PC-9 (cell line): ENCODE measurements at regions of chr13 and their contacts with region 1.

Region 1: DNA sequence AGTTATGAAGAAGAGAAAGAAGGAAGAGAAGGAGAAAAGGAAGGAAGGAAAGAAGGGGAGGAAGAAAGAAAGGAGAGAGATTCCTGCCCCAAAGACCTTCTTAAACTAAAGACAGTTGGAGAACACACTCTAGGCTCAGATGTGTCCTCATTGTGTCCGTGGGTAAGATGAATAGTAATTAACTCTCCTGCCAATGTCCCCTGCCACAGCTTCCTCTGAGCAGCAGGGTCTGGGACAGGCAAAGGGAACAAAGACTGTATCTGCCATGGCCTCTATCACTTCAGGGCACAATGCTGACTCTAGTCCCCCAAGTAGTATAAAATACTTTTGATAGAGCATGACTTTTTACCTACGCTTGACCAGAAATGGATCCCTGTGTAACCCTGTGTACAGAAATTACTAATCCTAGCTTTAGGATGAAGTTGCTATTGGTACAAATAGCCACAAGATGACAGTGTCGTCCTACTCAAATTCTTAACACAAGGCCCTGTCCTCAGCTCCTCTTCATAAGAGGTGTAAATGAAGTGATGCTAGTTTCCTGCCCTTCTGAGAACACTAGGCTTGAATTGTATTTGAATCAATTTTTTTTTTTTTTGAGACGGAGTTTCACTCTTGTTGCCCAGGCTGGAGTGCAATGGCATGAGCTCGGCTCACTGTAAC is 186.2 kb upstream of the GPR12 start:
- DNase-seq: peak in 1 of 2 experiments; percentile 57
- H3K4me3 ChIP-seq: no peak overlapping the region
- H3K27ac ChIP-seq: no peak overlapping the region
- H3K4me1 ChIP-seq: 0 out of 2 replicates have a peak, but pooled peaks cover 6% of the 10 kb centered on the region
- H3K27me3 ChIP-seq: 0 out of 2 replicates have a peak, but pooled peaks cover under 1% of the 10 kb centered on the region
- CTCF ChIP-seq: peak; percentile 86

Region 2: DNA sequence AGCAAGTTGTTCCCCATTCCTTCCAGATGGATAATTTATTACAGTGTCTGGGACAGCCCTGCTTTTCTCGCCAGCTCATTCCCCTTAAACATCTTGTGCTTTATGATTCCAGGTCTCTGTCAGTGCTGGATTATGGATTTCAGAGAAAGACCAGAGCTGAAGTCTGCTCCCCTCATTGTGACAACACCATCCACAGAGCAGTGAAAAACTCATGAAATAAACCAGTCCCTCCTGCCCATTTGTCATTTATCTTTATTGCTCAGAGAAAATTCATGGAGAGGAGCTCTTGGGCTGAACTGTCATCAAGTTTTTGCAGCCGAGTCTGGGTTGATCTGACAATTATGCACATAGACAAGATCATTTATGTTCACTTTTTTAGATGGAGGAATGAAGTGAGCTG is 93.5 kb before region 1 on chr13:
- CTCF ChIA-PET with region 1: no interaction called
- POLR2A ChIA-PET with region 1: no interaction called
- intact Hi-C with region 1: no loop called
- DNase-seq: no peak
- H3K4me3 ChIP-seq: no peak overlapping the region
- H3K27ac ChIP-seq: no peak overlapping the region
- H3K4me1 ChIP-seq: no peaks in the 10 kb centered on the region
- H3K27me3 ChIP-seq: peaks cover 77% of the 10 kb centered on the region
- CTCF ChIP-seq: no peak

Region 3: DNA sequence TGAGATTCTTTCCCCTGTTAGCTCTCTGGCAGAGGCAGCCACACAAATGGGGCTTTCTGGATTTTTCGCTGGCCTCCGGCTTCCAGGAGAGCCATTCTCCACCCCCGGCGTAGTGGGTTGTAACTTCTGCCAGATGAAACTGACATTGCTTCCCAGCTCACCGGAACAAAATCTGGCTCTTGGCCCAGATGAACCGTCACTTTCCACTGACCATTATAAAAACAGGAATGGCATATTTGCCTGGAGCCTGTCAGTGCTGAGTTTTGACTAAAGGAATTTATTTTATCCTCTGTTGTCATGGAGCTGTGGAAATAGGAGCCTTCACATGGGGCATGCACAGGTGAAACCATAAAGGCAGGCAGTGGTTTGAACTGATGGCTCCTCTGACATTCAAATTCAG is 65.6 kb before region 1 on chr13:
- CTCF ChIA-PET with region 1: no interaction called
- POLR2A ChIA-PET with region 1: no interaction called
- intact Hi-C with region 1: no loop called
- DNase-seq: no peak
- H3K4me3 ChIP-seq: no peak overlapping the region
- H3K27ac ChIP-seq: no peak overlapping the region
- H3K4me1 ChIP-seq: no peaks in the 10 kb centered on the region
- H3K27me3 ChIP-seq: peaks cover 80% of the 10 kb centered on the region
- CTCF ChIP-seq: no peak

Region 4: DNA sequence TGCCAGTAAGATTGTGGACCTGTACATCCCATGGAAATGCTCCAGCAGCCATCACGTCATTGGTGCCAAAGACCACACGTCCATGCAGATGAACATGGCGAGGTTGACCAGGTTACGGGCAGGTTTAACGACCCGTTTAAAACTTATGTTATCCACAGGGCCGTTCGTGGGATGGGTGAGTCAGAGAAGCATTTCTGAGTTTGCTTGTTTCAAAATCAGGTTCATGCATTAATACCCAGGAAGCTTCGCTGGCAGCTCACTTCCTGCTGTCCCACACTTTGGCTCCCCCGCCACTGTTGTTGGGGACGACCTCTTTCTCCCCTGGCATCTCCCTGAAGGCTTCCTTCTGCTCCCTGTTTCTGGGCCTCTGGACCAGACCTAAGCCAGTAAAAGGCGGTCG is 30.7 kb after region 1 on chr13:
- CTCF ChIA-PET with region 1: interaction called, 8 read pairs
- POLR2A ChIA-PET with region 1: interaction called, 19 read pairs
- intact Hi-C with region 1: no loop called
- DNase-seq: no peak
- H3K4me3 ChIP-seq: no peak overlapping the region
- H3K27ac ChIP-seq: no peak overlapping the region
- H3K4me1 ChIP-seq: peaks cover 2% of the 10 kb centered on the region
- H3K27me3 ChIP-seq: 0 out of 2 replicates have a peak, but pooled peaks cover 21% of the 10 kb centered on the region
- CTCF ChIP-seq: no peak

Region 5: GRCh38 chr13:27283906-27284493 is 337.2 kb after region 1 on chr13:
- CTCF ChIA-PET with region 1: interaction called, 4 read pairs
- POLR2A ChIA-PET with region 1: no interaction called
- intact Hi-C with region 1: loop called (anchors 5 kb)
- DNase-seq: peak; percentile 46 to 49
- H3K4me3 ChIP-seq: no peak overlapping the region
- H3K27ac ChIP-seq: no peak overlapping the region
- H3K4me1 ChIP-seq: peaks cover 20% of the 10 kb centered on the region
- H3K27me3 ChIP-seq: no peaks in the 10 kb centered on the region
- CTCF ChIP-seq: peak; percentile 65

Region 6: DNA sequence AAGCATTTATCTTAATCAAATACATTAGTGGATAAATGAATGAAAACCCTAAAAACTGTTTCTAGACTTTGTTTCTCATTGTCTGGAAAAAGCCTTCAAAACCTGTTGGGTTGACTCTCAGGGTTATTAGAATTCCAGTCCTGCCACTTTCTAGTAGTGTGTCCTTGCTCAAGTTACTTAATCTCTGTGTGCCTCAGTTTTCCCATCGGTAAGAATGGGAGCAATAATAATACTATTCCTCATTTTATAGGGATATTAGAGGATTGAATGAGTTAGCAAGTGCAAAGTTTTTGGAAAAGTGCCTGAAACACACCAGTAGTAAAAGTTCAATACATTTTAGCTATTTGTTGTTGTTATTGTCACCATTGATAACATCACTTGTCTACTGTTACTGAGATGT is 1038.8 kb after region 1 on chr13:
- CTCF ChIA-PET with region 1: interaction called, 5 read pairs
- POLR2A ChIA-PET with region 1: no interaction called
- intact Hi-C with region 1: loop called (anchors 2 kb)
- DNase-seq: no peak
- H3K4me3 ChIP-seq: no peak overlapping the region
- H3K27ac ChIP-seq: no peak overlapping the region
- H3K4me1 ChIP-seq: no peaks in the 10 kb centered on the region
- H3K27me3 ChIP-seq: peaks cover 38% of the 10 kb centered on the region
- CTCF ChIP-seq: no peak